ENCODE measurements at regions of chr1 and their contacts with region 1.

Region 1: DNA sequence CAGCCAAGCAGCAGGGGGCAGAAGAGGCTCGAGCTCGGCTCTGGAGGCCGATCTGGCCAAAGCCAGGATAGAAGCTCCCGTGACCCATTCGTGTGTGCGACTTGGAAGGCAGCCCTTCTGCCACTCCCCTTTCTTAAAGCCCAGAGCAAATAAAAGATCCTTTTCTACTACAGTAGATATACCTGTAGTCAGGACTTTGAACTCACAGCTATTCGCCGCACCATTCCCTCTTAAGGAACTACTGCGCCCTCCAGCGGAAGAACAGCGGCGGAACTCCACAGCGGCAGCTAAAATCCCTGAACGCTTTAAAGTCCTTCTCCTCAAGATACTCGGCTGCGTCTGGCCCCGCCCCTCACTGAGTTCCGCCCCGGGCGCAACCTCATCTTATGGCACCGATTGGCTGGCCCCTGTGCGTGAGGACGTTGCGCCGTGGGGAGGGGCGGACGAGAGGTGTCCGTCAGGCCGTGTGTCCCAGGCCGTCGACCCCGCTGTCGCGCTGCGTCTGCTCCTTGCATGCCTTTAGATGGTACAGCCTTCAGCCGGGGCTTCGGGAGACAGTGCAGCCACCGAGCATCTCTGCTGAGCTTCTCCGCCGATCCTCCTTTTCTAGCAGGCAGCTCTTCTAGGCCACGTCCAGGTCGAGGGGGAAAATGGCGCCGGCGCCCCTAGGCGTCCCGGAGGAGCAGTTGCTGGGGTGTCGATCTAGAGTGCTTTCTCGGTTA is at the start of gene LRIG2:
- DNase-seq: peak; percentile 99
- ATAC-seq: peak; percentile 98
- H3K4me3 Mint-ChIP-seq: peak within 1 kb of the TSS; percentile 98
- H3K27ac Mint-ChIP-seq: peak within 1 kb of the TSS; percentile 93
- H3K4me1 Mint-ChIP-seq: peaks cover 33% of the 10 kb centered on the region
- H3K27me3 Mint-ChIP-seq: no peaks in the 10 kb centered on the region
- total RNA-seq, gene LRIG2: 13.7 to 15.6 TPM

Region 2: GRCh38 chr1:112715264-112716053 is 357.5 kb before region 1 on chr1 and contains the start of gene PPM1J:
- CTCF ChIA-PET with region 1: interaction called, 44 read pairs
- POLR2A ChIA-PET with region 1: interaction called, 3 read pairs
- DNase-seq: peak; percentile 98
- ATAC-seq: peak; percentile 93
- H3K4me3 Mint-ChIP-seq: peak within 1 kb of the TSS; percentile 81
- H3K27ac Mint-ChIP-seq: peak within 1 kb of the TSS; percentile 64
- H3K4me1 Mint-ChIP-seq: peaks cover 28% of the 10 kb centered on the region
- H3K27me3 Mint-ChIP-seq: peaks cover 38% of the 10 kb centered on the region
- total RNA-seq, gene PPM1J: not detected

Region 3: DNA sequence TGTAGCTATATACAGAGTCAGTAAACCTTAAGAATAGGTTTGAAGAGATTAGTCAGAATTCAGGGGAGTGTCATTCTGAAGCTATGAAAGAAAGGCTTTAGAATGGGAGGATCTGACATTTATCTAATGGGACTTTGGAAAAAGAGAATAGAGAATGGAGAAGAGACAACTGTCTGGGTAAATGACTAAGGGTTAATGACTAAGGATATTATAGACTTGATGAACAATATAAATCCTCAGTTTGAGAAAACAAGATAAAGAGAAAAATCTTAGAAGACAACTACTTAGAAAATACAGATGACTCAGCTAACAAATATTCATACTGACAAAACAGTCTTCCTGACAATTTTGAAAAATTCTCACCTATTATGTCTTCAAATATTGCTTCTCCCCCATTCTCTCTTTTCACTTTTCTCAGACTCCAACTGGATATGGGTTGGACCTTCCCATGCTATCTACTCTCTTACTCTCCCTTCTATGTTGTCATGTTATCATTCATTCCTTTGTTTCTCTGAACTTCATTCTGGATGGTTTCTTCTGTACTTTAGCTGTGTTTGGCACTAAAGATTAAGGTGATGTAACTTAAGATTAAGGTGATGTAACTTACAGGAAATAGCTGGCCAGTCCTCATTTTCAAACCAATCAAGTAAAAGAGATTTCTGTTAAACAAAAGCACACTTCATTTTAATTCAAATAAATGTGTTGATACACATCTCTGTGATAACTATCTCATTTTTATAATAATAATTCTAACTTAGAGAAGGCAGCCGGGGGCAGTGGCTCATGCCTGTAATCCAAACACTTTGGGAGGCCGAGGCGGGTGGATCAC is 137.2 kb before region 1 on chr1:
- CTCF ChIA-PET with region 1: interaction called, 31 read pairs
- POLR2A ChIA-PET with region 1: no interaction called
- DNase-seq: no peak
- ATAC-seq: no peak
- H3K4me3 Mint-ChIP-seq: no peak overlapping the region
- H3K27ac Mint-ChIP-seq: peak overlapping the region; percentile 83
- H3K4me1 Mint-ChIP-seq: peaks cover 41% of the 10 kb centered on the region
- H3K27me3 Mint-ChIP-seq: no peaks in the 10 kb centered on the region

Region 4: DNA sequence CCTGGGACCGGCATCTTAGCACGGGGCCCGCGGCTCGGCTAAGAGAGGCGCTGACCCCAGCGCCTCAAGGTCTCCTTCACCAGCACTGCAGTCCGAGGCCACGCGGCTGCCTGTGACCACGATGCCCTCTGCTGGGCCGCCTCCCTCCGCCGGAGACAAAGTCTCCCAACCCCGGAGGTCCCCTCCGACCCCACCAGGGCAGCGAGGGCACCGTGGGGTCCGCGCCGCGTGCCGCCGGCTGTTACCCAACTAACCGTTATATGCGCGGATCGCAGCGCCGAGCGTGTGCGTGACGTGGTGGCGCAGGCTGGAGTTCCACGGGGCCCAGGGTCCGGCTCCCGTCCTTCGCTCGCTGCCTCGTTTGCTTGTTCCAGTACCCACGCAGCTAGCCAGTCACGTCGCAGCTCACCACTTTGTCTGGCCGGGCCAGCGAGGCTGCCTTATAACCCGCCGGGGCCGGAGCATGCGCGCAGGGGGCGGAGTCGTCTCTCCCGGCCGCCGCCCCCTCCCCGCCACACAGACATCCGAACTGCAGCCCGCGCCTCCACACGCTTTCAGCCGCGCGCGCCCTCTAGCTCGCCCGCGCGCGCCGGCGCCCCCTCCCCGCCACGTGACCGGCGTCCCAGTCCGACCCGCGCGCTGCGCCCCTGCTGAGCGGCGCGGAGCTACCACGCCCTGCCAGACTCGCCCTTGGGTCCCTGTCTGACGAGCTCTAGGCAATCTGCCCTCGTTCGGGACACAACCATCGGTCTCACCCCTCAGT is 117.0 kb before region 1 on chr1 and contains the start of gene SLC16A1:
- CTCF ChIA-PET with region 1: interaction called, 29 read pairs
- POLR2A ChIA-PET with region 1: interaction called, 14 read pairs
- DNase-seq: peak; percentile 92
- ATAC-seq: peak; percentile 79
- H3K4me3 Mint-ChIP-seq: peak within 1 kb of the TSS; percentile 100
- H3K27ac Mint-ChIP-seq: peak within 1 kb of the TSS; percentile 100
- H3K4me1 Mint-ChIP-seq: peaks cover 57% of the 10 kb centered on the region
- H3K27me3 Mint-ChIP-seq: no peaks in the 10 kb centered on the region
- total RNA-seq, gene SLC16A1: 53.0 to 54.5 TPM

Region 5: GRCh38 chr1:113042285-113043143 is 30.4 kb before region 1 on chr1:
- CTCF ChIA-PET with region 1: interaction called, 58 read pairs
- POLR2A ChIA-PET with region 1: interaction called, 5 read pairs
- DNase-seq: peak; percentile 45
- ATAC-seq: no peak
- H3K4me3 Mint-ChIP-seq: no peak overlapping the region
- H3K27ac Mint-ChIP-seq: no peak overlapping the region
- H3K4me1 Mint-ChIP-seq: peaks cover 40% of the 10 kb centered on the region
- H3K27me3 Mint-ChIP-seq: no peaks in the 10 kb centered on the region

Region 6: GRCh38 chr1:113088972-113089371 is 16.1 kb after region 1 on chr1:
- CTCF ChIA-PET with region 1: interaction called, 30 read pairs
- POLR2A ChIA-PET with region 1: no interaction called
- DNase-seq: no peak
- ATAC-seq: no peak
- H3K4me3 Mint-ChIP-seq: no peak overlapping the region
- H3K27ac Mint-ChIP-seq: no peak overlapping the region
- H3K4me1 Mint-ChIP-seq: peaks cover 8% of the 10 kb centered on the region
- H3K27me3 Mint-ChIP-seq: no peaks in the 10 kb centered on the region

Region 7: DNA sequence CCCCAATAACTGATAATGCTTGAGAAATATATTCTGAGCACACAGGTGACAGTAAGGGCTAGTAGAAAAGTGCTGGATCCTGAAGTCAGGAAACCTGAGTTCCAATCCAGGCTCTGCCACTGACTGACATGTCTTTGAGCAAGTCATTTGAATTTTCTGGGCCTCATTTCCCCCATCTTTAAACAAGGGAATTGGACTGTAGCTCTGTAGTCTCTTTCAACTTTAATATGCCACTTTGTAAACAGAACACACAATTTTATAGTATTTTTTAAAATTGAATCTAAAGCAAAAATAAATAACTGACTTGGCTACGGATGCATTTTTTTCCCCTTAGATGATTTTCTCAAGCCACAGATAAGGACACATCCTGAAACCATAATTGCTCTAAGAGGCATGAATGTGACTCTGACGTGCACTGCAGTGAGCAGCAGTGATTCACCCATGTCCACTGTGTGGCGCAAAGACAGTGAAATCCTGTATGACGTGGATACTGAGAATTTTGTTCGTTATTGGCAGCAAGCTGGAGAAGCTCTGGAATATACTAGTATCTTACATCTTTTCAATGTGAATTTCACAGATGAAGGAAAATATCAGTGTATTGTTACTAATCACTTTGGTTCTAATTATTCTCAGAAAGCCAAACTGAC is 37.1 kb after region 1 on chr1:
- CTCF ChIA-PET with region 1: interaction called, 10 read pairs
- POLR2A ChIA-PET with region 1: no interaction called
- DNase-seq: no peak
- ATAC-seq: no peak
- H3K4me3 Mint-ChIP-seq: no peak overlapping the region
- H3K27ac Mint-ChIP-seq: no peak overlapping the region
- H3K4me1 Mint-ChIP-seq: no peaks in the 10 kb centered on the region
- H3K27me3 Mint-ChIP-seq: no peaks in the 10 kb centered on the region

Region 8: GRCh38 chr1:113146242-113147072 is 73.5 kb after region 1 on chr1:
- CTCF ChIA-PET with region 1: no interaction called
- POLR2A ChIA-PET with region 1: no interaction called
- DNase-seq: peak; percentile 36
- ATAC-seq: peak; percentile 88
- H3K4me3 Mint-ChIP-seq: no peak overlapping the region
- H3K27ac Mint-ChIP-seq: peak overlapping the region; percentile 13
- H3K4me1 Mint-ChIP-seq: peaks cover 32% of the 10 kb centered on the region
- H3K27me3 Mint-ChIP-seq: no peaks in the 10 kb centered on the region

Measured in activated CD8-positive, alpha-beta T cell treated with anti-CD3 and anti-CD28 coated beads, Interleukin-2, amount 10 ng/mL, durations not matched to agents 7 days and 5 days (primary cell).